ENCODE measurements at regions of chr15 and their contacts with region 1.

Region 1: GRCh38 chr15:49060710-49061505 is 14.7 kb upstream of the SECISBP2L start:
- DNase-seq: no peak
- CTCF ChIP-seq: no peak

Region 2: DNA sequence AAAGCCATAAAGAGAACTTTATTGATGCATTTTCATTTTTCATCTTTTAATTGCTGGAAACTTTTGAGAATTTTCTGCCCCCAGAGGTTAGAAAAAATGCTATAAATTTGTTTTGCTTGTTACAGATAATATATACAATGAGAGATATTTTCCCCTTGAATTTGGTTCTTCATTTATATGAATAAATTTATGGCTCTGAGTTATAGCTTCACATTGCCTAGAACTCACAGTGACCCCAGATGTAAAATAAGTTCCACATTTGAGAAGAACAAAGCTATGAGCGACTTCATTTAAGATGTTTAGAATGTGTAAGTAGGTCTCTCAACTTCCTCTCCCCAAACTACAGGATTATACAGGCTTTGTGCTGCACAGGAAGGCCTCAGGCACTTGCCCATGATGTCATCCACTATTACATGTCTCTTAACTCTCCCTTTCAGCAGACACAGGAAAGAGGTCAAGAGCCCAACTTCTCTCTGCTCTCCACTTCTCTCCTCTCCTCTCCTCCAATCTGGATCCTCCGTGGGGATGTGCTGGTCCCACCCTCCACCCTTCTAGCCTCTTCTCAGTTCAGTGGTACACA is 636.9 kb before region 1 on chr15:
- CTCF ChIA-PET with region 1: no interaction called
- POLR2A ChIA-PET with region 1: no interaction called
- DNase-seq: no peak
- CTCF ChIP-seq: no peak

Region 3: DNA sequence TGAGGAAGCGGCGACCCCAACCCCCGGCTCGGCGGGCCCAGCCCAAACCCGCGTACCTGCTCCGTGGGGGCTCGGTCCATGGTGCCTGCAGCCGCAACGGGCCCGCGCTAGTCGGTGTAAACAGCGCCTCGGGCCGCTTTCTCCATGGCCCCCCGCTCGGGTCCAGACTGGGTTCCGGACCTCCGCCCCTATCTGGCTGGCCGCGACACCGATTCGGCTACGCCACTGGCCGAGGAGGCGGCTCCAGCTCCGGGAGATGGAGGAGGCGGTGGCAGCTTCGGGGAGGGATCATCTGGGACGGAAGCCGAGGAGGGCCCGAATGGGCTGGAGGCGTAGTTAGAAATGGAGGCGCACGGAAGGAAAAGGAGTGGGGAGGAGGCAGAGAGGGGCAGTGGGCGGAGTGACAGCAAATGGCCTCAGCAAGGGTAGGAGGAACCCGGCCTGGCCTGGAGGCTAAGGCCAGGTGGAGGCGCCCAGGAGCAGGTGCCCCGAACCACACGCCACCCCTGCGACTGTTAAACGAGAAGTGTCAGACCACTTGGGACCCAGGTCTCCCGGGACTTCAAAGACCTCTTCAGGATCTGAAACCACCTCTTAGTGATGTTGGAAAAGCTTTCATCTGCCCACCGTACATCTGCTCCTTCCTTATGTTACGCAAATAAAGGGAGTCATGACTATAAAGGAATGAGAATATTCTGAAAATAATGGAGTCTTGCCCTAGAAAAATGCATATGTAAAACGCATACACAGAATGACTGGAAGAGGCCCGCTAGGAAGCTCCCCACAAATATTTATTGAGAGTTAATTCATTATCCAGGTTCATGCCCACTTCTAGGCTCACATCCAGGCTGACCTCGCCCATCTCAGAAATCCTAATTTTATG is 14.4 kb before region 1 on chr15 and contains the start of gene SECISBP2L:
- CTCF ChIA-PET with region 1: interaction called, 15 read pairs
- POLR2A ChIA-PET with region 1: no interaction called
- DNase-seq: peak; percentile 94
- CTCF ChIP-seq: peak; percentile 74

Region 4: GRCh38 chr15:49212930-49213329 is 152.0 kb after region 1 on chr15:
- CTCF ChIA-PET with region 1: no interaction called
- POLR2A ChIA-PET with region 1: no interaction called
- DNase-seq: no peak
- CTCF ChIP-seq: no peak